ENCODE measurements at regions of chr11 and their contacts with region 1.

Region 1: GRCh38 chr11:85810871-85811611 is at the start of gene SYTL2:
- DNase-seq: peak; percentile 91
- total RNA-seq, gene SYTL2: 144 to 183 TPM

Region 2: GRCh38 chr11:85694386-85694980 is 116.6 kb before region 1 on chr11:
- intact Hi-C with region 1: loop called in 1 of 2 experiments (anchors 10 kb)
- DNase-seq: no peak

Region 3: GRCh38 chr11:85718991-85719807 is 91.8 kb before region 1 on chr11:
- intact Hi-C with region 1: loop called in 1 of 2 experiments (anchors 10 kb)
- DNase-seq: peak; percentile 84

Measured in posterior vena cava (tissue), 2 donors.